ENCODE measurements at regions of chr9 and their contacts with region 1.

Region 1: DNA sequence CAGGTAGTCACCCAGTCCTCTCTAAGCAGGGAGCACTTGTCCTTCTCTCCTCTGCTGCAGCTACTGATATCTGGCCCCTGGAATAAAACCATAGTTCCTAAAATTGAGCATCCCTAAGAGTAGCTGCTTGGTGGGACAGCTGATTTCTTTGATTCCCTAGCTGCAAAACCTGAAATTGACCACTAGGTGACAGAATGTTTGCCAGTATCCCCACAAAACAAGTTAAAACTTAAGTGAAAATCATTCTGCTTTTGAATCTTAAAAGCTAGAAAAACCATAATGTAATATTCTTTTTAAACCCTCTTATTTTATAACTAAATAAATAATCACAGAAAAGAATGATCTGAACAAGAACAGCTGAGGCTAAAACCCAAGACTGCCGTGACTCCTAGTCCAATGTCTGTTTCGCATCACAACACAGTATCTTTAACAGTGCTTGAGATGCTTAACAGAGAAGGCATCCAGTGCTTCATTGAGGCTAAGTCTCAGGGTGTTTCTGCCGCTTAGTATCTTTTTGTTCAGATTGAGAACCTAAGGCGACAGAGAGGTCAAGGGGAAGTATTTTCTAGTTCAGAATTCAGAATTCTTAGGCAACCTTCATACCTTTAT is 24.4 kb upstream of the TAL2 start:
- DNase-seq: no peak
- CTCF ChIP-seq: peak; percentile 31

Region 2: DNA sequence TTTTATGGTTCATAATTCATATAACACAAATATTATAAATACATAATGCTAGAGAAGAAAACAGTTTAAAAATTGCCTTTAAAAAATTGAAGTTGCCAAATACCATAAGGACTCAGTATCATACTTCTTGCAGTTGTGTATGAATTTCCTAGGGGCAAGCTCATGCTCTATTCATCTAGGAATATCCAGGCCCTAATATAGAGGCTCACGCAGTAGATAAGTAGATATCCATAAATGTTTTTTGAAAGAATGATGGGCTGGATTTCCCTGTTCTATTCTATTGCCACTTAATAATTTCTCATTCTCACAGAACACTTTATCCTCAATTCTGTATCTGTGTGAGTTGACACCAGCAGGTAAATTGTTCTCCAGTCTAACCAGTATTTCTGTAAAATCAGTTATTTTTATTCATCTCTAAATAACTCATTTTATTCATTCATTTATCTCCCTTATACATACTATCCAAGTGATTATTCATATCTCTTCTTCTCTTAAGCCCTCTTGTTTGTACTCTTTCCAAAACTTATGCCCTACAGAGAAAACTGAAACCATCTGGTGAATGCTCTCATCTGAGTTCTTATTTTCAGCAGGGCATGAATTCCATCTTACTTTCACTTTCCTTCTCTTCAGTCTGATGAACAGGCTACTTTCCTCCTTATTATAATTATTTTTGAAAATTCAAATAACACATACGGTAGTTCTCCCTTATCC is 296.3 kb before region 1 on chr9:
- CTCF ChIA-PET with region 1: no interaction called
- POLR2A ChIA-PET with region 1: no interaction called
- DNase-seq: no peak
- CTCF ChIP-seq: no peak

Region 3: DNA sequence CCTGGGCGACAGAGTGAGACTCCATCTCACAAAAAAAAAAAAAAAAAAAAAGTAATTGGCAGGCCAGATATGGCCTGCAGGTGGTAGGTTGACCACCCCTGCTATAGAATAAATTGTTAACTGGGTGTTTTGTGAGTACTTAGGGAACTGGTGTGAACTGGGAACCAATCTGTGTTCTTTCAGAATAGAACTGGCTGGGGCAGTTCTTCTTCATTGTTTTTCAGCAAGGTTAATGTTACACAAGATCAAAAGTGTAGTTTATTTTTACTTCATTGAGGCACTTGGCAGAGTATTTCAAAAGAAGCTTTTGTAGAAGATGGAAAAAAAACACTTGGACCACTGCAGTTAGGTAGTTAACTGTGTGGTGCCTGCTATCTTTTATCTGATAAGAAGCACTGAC is 266.2 kb before region 1 on chr9:
- CTCF ChIA-PET with region 1: no interaction called
- POLR2A ChIA-PET with region 1: no interaction called
- DNase-seq: no peak
- CTCF ChIP-seq: no peak

Region 4: GRCh38 chr9:105447386-105447813 is 190.5 kb before region 1 on chr9:
- CTCF ChIA-PET with region 1: no interaction called
- POLR2A ChIA-PET with region 1: no interaction called
- DNase-seq: no peak
- CTCF ChIP-seq: no peak

Region 5: GRCh38 chr9:105656131-105656921 is 18.4 kb after region 1 on chr9:
- CTCF ChIA-PET with region 1: interaction called, 15 read pairs
- POLR2A ChIA-PET with region 1: no interaction called
- DNase-seq: peak; percentile 78
- CTCF ChIP-seq: peak; percentile 61